T-cell (primary cell): ENCODE measurements at regions of chr1 and their contacts with region 1.

Region 1: GRCh38 chr1:117664314-117664713 is 58.5 kb downstream of the TENT5C start:
- DNase-seq: peak in 33 of 35 experiments; percentile 30 to 91 (median 65)
- ATAC-seq: peak; percentile 84 to 92 (median 92)
- H3K4me3 ChIP-seq: no peak overlapping the region
- H3K4me3 Mint-ChIP-seq: peak overlapping the region in 1 of 3 donors; percentile 42
- H3K27ac ChIP-seq: peak overlapping the region; percentile 93
- H3K27ac Mint-ChIP-seq: peak overlapping the region; percentile 90 to 92
- H3K4me1 ChIP-seq: peaks cover 25 to 69% of the 10 kb centered on the region in 2 experiments
- H3K4me1 Mint-ChIP-seq: peaks cover 66 to 84% (median 79%) of the 10 kb centered on the region in 3 donors
- H3K27me3 ChIP-seq: peaks cover 0 to 5% of the 10 kb centered on the region in 2 experiments
- H3K27me3 Mint-ChIP-seq: peaks cover 0 to 4% of the 10 kb centered on the region in 2 donors

Region 2: DNA sequence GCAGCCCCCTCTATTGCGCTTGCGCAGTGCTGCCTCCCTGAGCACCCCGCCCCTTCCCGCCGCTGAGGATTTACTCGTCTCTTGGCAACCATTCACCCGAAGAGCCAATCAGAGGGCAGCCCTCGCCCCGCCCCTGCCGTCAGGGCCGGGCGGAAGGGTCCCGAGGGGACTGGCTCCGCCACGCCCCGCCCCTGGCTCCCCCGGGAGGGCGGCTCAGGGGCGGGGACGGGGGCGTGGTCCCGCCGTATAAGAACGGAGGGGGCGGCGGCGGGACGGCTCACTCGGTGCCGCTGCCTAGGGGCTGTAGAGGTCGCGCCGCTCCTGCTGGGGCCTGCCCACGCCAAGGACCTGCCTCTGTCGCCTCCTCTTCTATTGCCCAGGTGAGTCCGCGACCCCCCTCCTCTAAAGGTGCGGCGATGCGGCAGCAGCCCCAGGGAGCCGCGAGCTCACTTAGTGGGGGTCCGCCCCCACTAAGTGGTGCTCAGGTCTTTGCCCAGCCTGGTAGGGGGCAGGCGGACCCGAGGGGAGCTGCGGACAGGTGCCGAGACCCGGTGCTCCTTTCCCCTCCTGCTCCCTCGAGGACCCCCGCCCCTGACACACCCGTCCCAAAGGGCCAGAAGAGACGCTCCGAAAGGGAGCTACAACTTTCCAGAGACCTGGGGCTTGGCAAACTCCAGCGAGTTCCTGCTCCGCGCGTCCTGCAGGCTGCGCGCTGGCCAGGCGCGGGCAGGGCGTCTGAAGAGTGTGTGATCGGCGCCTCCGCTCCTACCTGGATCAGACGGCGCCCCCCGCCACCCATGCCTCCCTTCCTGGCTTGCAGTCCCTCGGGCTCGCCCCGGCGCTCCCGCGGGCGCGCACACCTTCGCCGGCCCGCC is 58.3 kb before region 1 on chr1 and contains the start of gene TENT5C:
- CTCF ChIA-PET with region 1: interaction called in 1 of 2 experiments, 39 read pairs
- POLR2A ChIA-PET with region 1: interaction called, 10 to 97 read pairs
- DNase-seq: peak; percentile 96 to 99 (median 98)
- ATAC-seq: peak; percentile 90 to 96 (median 92)
- H3K4me3 ChIP-seq: peak within 1 kb of the TSS; percentile 91 to 92
- H3K4me3 Mint-ChIP-seq: peak within 1 kb of the TSS; percentile 97 to 98 (median 98)
- H3K27ac ChIP-seq: peak within 1 kb of the TSS; percentile 94
- H3K27ac Mint-ChIP-seq: peak within 1 kb of the TSS; percentile 95 to 98
- H3K4me1 ChIP-seq: peaks cover 11 to 32% of the 10 kb centered on the region in 2 experiments
- H3K4me1 Mint-ChIP-seq: peaks cover 41 to 52% (median 45%) of the 10 kb centered on the region in 3 donors
- H3K27me3 ChIP-seq: peaks cover 2% of the 10 kb centered on the region in 2 experiments
- H3K27me3 Mint-ChIP-seq: no peaks in the 10 kb centered on the region
- total RNA-seq, gene TENT5C: 7.6 to 133 (median 11.2) TPM